ENCODE measurements at regions of chr20 and their contacts with region 1.

Region 1: GRCh38 chr20:38498909-38499308 is 26.3 kb downstream of the RALGAPB start:
- H3K4me3 Mint-ChIP-seq: no peak overlapping the region
- H3K27ac Mint-ChIP-seq: no peak overlapping the region
- H3K4me1 Mint-ChIP-seq: no peaks in the 10 kb centered on the region
- H3K27me3 Mint-ChIP-seq: no peaks in the 10 kb centered on the region

Region 2: GRCh38 chr20:38543014-38543906 is 44.4 kb after region 1 on chr20:
- intact Hi-C with region 1: loop called (anchors 10 kb)
- H3K4me3 Mint-ChIP-seq: no peak overlapping the region
- H3K27ac Mint-ChIP-seq: no peak overlapping the region
- H3K4me1 Mint-ChIP-seq: no peaks in the 10 kb centered on the region
- H3K27me3 Mint-ChIP-seq: no peaks in the 10 kb centered on the region